ENCODE measurements at regions of chr11 and their contacts with region 1.

Region 1: DNA sequence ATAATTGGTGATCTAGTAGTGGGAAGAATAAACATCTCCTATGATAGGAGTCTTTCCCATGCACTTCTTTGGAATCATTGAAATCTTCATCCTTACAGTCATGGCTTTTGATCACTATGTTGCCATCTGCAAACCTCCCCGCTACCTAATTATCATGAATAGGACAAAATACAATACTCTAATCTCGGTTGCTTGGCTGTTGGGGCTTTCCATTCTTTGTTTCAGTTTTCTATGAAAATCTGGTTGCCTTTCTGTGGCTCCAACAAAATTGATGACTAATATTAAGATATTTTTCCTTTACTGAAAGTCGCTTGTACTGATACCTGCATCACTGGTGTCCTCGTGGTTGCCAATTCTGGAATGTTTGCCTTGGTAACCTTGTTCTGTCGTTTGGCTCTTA is 11.9 kb downstream of the OR4C6 start:
- DNase-seq: no peak
- H3K4me3 ChIP-seq: no peak overlapping the region
- H3K27ac ChIP-seq: no peak overlapping the region
- H3K4me1 ChIP-seq: no peaks in the 10 kb centered on the region
- H3K27me3 ChIP-seq: no peaks in the 10 kb centered on the region
- CTCF ChIP-seq: no peak

Region 2: DNA sequence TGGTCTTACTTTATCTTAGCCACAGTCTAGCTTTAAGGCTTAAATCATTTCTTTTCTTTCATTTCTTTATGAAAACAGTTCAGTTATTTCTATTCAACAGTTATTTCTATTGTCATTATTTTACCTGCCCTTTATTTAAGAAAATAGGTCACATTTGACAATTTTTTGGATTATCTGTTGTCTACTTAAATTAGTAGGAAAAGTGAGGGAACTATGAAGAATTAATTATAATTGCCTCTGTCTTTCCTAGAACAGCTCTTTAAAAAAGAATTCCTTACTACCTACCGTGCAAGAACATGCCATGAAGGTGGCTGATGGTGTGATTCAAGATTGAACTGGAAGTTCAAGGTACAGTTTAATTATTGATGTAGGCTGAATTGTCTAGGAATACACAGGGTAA is 12.0 kb before region 1 on chr11 and contains the start of gene OR4C6:
- CTCF ChIA-PET with region 1: no interaction called
- POLR2A ChIA-PET with region 1: no interaction called
- intact Hi-C with region 1: loop called (anchors 1 kb)
- DNase-seq: no peak
- H3K4me3 ChIP-seq: no peak within 1 kb of the TSS
- H3K27ac ChIP-seq: no peak within 1 kb of the TSS
- H3K4me1 ChIP-seq: no peaks in the 10 kb centered on the region
- H3K27me3 ChIP-seq: no peaks in the 10 kb centered on the region
- CTCF ChIP-seq: no peak
- total RNA-seq, gene OR4C6: not detected in 2 replicates

Region 3: DNA sequence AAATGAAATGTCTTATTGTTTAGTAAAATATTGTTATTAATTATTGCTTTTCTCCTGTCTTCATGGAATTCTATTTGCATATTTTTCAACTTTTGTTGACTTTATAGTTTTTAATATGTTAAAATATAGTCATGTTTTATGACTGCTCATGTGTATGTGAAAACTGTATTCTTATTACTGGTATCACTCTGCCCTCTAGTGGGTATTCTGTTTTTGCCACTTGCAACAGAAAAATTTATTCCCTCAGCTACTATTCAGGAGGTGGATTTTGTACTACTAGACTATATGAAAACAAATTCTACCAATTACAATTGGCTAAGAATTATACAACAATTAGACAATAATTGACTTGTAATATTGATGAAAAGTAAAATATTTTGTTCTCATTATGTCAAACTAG is 33.2 kb after region 1 on chr11:
- CTCF ChIA-PET with region 1: no interaction called
- POLR2A ChIA-PET with region 1: no interaction called
- intact Hi-C with region 1: no loop called
- DNase-seq: no peak
- H3K4me3 ChIP-seq: no peak overlapping the region
- H3K27ac ChIP-seq: no peak overlapping the region
- H3K4me1 ChIP-seq: no peaks in the 10 kb centered on the region
- H3K27me3 ChIP-seq: no peaks in the 10 kb centered on the region
- CTCF ChIP-seq: peak; percentile 91